CD8-positive, alpha-beta T cell (primary cell): ENCODE measurements at regions of chr5 and their contacts with region 1.

Region 1: GRCh38 chr5:179678223-179679013 is 2.4 kb downstream of the CBY3 start:
- DNase-seq: peak; percentile 85 to 98 (median 92)
- ATAC-seq: peak; percentile 85
- H3K4me3 ChIP-seq: peak overlapping the region; percentile 66 to 98
- H3K4me3 Mint-ChIP-seq: peak overlapping the region; percentile 98
- H3K27ac ChIP-seq: peak overlapping the region; percentile 83 to 91
- H3K27ac Mint-ChIP-seq: peak overlapping the region; percentile 99
- H3K4me1 ChIP-seq: peaks cover 22% of the 10 kb centered on the region
- H3K4me1 Mint-ChIP-seq: peaks cover 37% of the 10 kb centered on the region
- H3K27me3 ChIP-seq: no peaks in the 10 kb centered on the region
- H3K27me3 Mint-ChIP-seq: no peaks in the 10 kb centered on the region
- CTCF ChIP-seq: no peak

Region 2: DNA sequence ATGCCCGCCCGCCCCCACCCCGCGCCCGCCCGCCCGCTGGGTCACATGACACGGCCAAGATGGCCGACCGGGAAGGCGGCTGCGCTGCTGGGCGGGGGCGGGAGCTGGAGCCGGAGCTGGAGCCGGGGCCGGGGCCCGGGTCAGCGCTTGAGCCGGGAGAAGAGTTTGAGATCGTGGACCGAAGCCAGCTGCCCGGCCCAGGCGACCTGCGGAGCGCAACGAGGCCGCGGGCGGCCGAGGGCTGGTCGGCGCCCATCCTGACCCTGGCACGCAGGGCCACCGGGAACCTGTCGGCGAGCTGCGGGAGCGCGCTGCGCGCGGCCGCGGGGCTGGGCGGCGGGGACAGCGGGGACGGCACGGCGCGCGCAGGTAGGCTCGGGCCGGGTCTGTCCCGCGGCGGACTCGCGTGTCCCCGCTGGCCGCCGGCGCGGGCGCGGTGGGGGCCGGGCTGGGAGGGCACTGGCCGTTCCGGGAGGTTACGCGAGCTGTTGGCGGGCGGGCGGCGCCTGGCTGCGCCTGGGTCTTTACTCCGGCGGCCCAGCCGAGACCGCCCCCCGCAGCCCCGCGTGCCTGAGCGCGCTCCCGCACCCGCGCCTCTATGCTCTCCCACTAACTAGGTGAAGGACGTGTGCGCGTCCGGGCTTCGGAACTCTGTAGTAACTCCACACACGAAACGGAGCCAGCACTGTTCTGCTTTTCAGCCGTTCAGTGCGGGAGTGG is 127.7 kb before region 1 on chr5 and contains the start of gene RUFY1:
- CTCF ChIA-PET with region 1: no interaction called
- POLR2A ChIA-PET with region 1: interaction called, 7 read pairs
- intact Hi-C with region 1: loop called in 1 of 2 experiments (anchors 1 kb)
- DNase-seq: peak; percentile 69 to 91 (median 82)
- ATAC-seq: peak; percentile 71
- H3K4me3 ChIP-seq: peak within 1 kb of the TSS; percentile 89 to 98
- H3K4me3 Mint-ChIP-seq: peak within 1 kb of the TSS; percentile 97
- H3K27ac ChIP-seq: peak within 1 kb of the TSS; percentile 76 to 80
- H3K27ac Mint-ChIP-seq: peak within 1 kb of the TSS; percentile 97
- H3K4me1 ChIP-seq: peaks cover 26% of the 10 kb centered on the region
- H3K4me1 Mint-ChIP-seq: peaks cover 42% of the 10 kb centered on the region
- H3K27me3 ChIP-seq: no peaks in the 10 kb centered on the region
- H3K27me3 Mint-ChIP-seq: no peaks in the 10 kb centered on the region
- CTCF ChIP-seq: no peak
- total RNA-seq, gene RUFY1: 19.6 to 19.8 TPM

Region 3: GRCh38 chr5:179697993-179698934 is 19.8 kb after region 1 on chr5:
- CTCF ChIA-PET with region 1: interaction called, 4 read pairs
- POLR2A ChIA-PET with region 1: interaction called, 8 read pairs
- intact Hi-C with region 1: loop called (anchors 1 kb)
- DNase-seq: peak; percentile 97 to 100 (median 98)
- ATAC-seq: peak; percentile 87
- H3K4me3 ChIP-seq: peak overlapping the region; percentile 84 to 89
- H3K4me3 Mint-ChIP-seq: peak overlapping the region; percentile 99
- H3K27ac ChIP-seq: peak overlapping the region; percentile 92 to 94
- H3K27ac Mint-ChIP-seq: peak overlapping the region; percentile 100
- H3K4me1 ChIP-seq: peaks cover 32% of the 10 kb centered on the region
- H3K4me1 Mint-ChIP-seq: peaks cover 40% of the 10 kb centered on the region
- H3K27me3 ChIP-seq: no peaks in the 10 kb centered on the region
- H3K27me3 Mint-ChIP-seq: no peaks in the 10 kb centered on the region
- CTCF ChIP-seq: no peak

Region 4: DNA sequence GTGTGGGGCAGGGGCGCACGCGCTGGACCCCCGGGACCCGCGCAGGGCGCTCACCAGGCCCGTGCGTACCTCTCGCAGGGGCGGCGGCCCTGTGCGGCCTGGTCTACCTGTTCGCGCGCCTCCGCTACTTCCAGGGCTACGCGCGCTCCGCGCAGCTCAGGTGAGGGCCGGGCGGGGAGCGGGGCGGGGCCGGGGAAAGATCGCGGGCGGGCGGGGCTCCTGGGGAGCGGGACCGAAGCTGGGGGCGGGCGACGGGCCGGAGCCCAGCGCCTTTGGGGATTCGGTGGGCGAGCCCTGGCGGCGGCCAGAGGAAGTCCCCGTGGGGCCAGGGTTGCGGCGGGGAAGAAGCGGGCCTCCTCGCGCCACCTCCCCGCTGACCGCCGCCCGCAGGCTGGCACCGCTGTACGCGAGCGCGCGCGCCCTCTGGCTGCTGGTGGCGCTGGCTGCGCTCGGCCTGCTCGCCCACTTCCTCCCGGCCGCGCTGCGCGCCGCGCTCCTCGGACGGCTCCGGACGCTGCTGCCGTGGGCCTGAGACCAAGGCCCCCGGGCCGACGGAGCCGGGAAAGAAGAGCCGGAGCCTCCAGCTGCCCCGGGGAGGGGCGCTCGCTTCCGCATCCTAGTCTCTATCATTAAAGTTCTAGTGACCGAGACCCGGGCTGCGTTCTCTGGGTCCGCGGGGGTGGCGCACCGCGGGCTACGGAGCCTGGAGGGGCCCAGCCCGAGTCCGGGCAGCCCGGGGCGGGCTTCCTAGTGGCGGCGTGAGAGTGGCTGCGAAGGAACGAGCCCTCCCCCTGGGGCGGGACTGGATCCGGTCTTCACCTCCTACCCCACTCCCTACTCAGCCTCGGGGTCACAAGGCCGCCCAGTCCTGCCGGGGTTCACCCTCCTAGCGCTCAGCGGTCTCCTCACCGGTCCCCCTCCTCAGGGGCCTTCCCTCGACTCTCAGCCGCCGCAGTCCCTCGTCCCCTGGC is 117.7 kb after region 1 on chr5:
- CTCF ChIA-PET with region 1: interaction called, 4 read pairs
- POLR2A ChIA-PET with region 1: no interaction called
- intact Hi-C with region 1: loop called in 1 of 2 experiments (anchors 5 kb)
- DNase-seq: peak; percentile 43 to 86 (median 66)
- ATAC-seq: peak; percentile 64
- H3K4me3 ChIP-seq: peak overlapping the region; percentile 36 to 50
- H3K4me3 Mint-ChIP-seq: peak overlapping the region; percentile 75
- H3K27ac ChIP-seq: peak overlapping the region; percentile 23 to 31
- H3K27ac Mint-ChIP-seq: peak overlapping the region; percentile 37
- H3K4me1 ChIP-seq: peaks cover 33% of the 10 kb centered on the region
- H3K4me1 Mint-ChIP-seq: peaks cover 29% of the 10 kb centered on the region
- H3K27me3 ChIP-seq: no peaks in the 10 kb centered on the region
- H3K27me3 Mint-ChIP-seq: no peaks in the 10 kb centered on the region
- CTCF ChIP-seq: peak; percentile 67

Region 5: GRCh38 chr5:180259260-180259681 is 580.9 kb after region 1 on chr5:
- CTCF ChIA-PET with region 1: no interaction called
- POLR2A ChIA-PET with region 1: no interaction called
- intact Hi-C with region 1: no loop called
- DNase-seq: no peak
- ATAC-seq: no peak
- H3K4me3 ChIP-seq: no peak overlapping the region
- H3K4me3 Mint-ChIP-seq: no peak overlapping the region
- H3K27ac ChIP-seq: no peak overlapping the region
- H3K27ac Mint-ChIP-seq: no peak overlapping the region
- H3K4me1 ChIP-seq: no peaks in the 10 kb centered on the region
- H3K4me1 Mint-ChIP-seq: no peaks in the 10 kb centered on the region
- H3K27me3 ChIP-seq: no peaks in the 10 kb centered on the region
- H3K27me3 Mint-ChIP-seq: no peaks in the 10 kb centered on the region
- CTCF ChIP-seq: no peak